CD8-positive, alpha-beta T cell (primary cell): ENCODE measurements at regions of chrX and their contacts with region 1.

Region 1: DNA sequence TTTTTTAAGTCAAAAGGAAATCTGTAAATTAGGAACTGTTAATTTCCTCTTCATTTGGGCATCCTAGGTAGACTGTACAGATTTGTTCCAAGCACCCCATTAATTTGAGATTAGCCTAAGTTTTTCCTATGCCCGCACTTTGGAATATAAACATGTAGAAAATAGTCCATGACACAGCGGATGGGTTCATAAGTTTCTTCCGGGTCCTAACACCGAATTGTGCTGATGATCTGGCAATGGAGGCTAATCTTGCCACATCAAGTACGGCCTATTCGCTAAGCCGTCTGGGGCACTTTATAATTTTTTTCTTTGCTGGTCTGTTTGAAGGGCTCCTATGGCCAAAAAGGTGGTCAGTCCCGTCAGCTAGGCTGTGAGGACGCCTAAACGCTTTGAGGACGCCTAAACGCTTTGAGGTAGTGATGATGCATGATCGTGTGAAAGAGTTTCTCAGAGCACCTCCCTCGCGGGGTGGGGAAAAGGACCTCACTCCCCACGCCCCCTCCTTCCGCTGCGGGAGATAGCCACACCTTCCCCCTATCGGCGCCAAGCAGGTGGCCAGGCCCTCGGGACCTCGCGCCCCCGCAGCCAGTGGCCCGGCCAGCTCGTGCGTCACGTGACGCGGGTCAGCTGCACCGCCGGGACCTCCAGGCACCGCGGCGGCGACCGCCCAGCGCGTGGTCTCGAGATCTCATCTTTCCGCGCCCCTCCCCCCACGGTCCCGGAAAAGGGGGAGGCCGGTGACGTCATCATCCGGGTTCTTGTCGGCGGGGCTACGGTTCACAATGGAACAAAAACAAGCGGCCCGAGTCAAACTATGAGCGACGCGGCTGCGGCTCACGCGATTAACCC is 977 bp upstream of the USP9X start:
- DNase-seq: peak; percentile 88 to 100 (median 96)
- ATAC-seq: peak; percentile 66
- H3K4me3 ChIP-seq: peak overlapping the region; percentile 68 to 95
- H3K4me3 Mint-ChIP-seq: peak overlapping the region; percentile 95
- H3K27ac ChIP-seq: peak overlapping the region; percentile 98 to 100
- H3K27ac Mint-ChIP-seq: peak overlapping the region; percentile 100
- H3K4me1 ChIP-seq: peaks cover 19% of the 10 kb centered on the region
- H3K4me1 Mint-ChIP-seq: peaks cover 24% of the 10 kb centered on the region
- H3K27me3 ChIP-seq: no peaks in the 10 kb centered on the region
- H3K27me3 Mint-ChIP-seq: no peaks in the 10 kb centered on the region
- CTCF ChIP-seq: no peak

Region 2: DNA sequence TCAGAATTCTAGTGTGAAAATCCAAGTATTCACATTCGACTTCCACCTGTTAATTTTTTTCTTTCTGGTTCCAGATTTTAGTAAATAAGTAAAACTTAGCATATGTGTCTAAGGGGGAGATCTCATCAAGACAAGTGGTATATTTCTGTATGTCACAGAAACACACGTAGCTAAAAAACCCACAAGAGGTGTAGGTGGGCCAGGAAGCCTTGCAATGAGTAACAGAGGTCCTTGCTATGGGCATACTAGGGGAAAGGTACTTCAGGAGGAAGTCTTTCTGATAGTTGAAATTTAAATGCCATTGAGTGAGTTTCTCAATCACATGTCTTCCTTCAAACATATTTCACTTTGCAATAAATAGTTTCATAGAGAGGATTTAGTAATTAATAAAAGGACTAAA is 1967.2 kb before region 1 on chrX:
- CTCF ChIA-PET with region 1: no interaction called
- POLR2A ChIA-PET with region 1: no interaction called
- intact Hi-C with region 1: no loop called
- DNase-seq: no peak
- ATAC-seq: no peak
- H3K4me3 ChIP-seq: no peak overlapping the region
- H3K4me3 Mint-ChIP-seq: no peak overlapping the region
- H3K27ac ChIP-seq: no peak overlapping the region
- H3K27ac Mint-ChIP-seq: no peak overlapping the region
- H3K4me1 ChIP-seq: no peaks in the 10 kb centered on the region
- H3K4me1 Mint-ChIP-seq: no peaks in the 10 kb centered on the region
- H3K27me3 ChIP-seq: no peaks in the 10 kb centered on the region
- H3K27me3 Mint-ChIP-seq: peaks cover 2% of the 10 kb centered on the region
- CTCF ChIP-seq: no peak

Region 3: GRCh38 chrX:40169193-40170101 is 914.8 kb before region 1 on chrX:
- CTCF ChIA-PET with region 1: no interaction called
- POLR2A ChIA-PET with region 1: no interaction called
- intact Hi-C with region 1: loop called in 1 of 2 experiments (anchors 10 kb)
- DNase-seq: peak; percentile 62 to 91 (median 81)
- ATAC-seq: peak; percentile 66
- H3K4me3 ChIP-seq: peak overlapping the region; percentile 42 to 61
- H3K4me3 Mint-ChIP-seq: peak overlapping the region; percentile 85
- H3K27ac ChIP-seq: peak overlapping the region; percentile 83 to 95
- H3K27ac Mint-ChIP-seq: peak overlapping the region; percentile 96
- H3K4me1 ChIP-seq: peaks cover 49% of the 10 kb centered on the region
- H3K4me1 Mint-ChIP-seq: peaks cover 48% of the 10 kb centered on the region
- H3K27me3 ChIP-seq: no peaks in the 10 kb centered on the region
- H3K27me3 Mint-ChIP-seq: no peaks in the 10 kb centered on the region
- CTCF ChIP-seq: peak; percentile 22

Region 4: DNA sequence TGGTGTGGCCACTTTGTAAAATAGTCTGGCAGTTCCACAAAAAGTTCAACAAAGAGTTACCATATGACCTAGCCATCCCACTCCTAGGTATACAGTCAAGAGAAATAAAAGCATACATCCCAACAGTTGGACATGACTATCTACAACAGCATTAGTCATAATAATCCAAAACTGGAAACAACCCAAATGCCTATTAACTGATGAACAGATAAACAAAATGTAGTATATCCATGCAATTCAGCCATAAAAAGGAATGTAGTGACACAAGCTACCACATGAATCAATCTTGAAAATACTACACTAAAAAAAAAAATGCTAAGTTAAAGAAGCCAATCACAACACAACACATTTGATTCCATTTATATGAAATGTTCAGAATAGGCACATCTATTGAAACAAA is 365.1 kb before region 1 on chrX:
- CTCF ChIA-PET with region 1: no interaction called
- POLR2A ChIA-PET with region 1: interaction called, 10 read pairs
- intact Hi-C with region 1: no loop called
- DNase-seq: no peak
- ATAC-seq: no peak
- H3K4me3 ChIP-seq: no peak overlapping the region
- H3K4me3 Mint-ChIP-seq: no peak overlapping the region
- H3K27ac ChIP-seq: no peak overlapping the region
- H3K27ac Mint-ChIP-seq: peak overlapping the region; percentile 71
- H3K4me1 ChIP-seq: peaks cover 9% of the 10 kb centered on the region
- H3K4me1 Mint-ChIP-seq: peaks cover 57% of the 10 kb centered on the region
- H3K27me3 ChIP-seq: no peaks in the 10 kb centered on the region
- H3K27me3 Mint-ChIP-seq: no peaks in the 10 kb centered on the region
- CTCF ChIP-seq: no peak

Region 5: DNA sequence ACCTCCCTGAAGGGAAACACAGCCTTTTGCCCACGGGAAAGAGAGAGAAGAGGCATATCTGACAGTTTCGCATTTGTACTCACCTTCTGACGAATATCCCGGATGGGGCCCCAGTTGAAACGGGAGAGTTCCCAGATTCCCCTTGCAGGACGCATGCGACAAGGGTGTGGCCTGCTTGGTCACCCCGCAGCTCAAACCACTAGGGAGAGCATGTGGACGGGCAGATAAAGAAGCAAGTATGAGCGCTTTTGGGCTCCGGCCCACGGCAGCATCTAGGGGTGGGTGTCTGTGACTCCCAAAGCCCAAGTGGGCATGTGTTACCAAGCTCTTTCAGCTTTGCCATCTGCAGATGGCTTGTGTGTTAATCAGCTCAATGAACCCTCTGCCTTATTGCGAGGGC is 278.9 kb before region 1 on chrX:
- CTCF ChIA-PET with region 1: no interaction called
- POLR2A ChIA-PET with region 1: no interaction called
- intact Hi-C with region 1: no loop called
- DNase-seq: no peak
- ATAC-seq: no peak
- H3K4me3 ChIP-seq: no peak overlapping the region
- H3K4me3 Mint-ChIP-seq: no peak overlapping the region
- H3K27ac ChIP-seq: no peak overlapping the region
- H3K27ac Mint-ChIP-seq: no peak overlapping the region
- H3K4me1 ChIP-seq: no peaks in the 10 kb centered on the region
- H3K4me1 Mint-ChIP-seq: no peaks in the 10 kb centered on the region
- H3K27me3 ChIP-seq: no peaks in the 10 kb centered on the region
- H3K27me3 Mint-ChIP-seq: no peaks in the 10 kb centered on the region
- CTCF ChIP-seq: no peak

Region 6: DNA sequence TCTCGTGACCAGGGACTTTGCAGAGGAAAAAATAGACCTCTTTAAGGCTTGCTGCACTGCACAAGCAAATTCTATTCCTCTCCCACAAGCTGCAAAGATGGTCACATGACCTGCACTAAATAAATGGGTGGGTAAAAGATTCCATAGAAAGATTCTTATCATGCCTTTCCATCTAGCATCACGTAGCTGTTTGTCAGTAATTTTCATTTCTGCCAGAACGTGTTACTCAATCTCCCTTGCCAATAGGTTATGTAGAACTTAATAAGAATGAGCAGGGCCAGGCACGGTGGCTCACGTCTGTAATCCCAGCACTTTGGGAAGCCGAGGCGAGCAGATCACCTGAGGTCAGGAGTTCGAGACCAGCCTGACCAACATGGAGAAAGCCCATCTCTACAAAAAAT is 56.8 kb before region 1 on chrX:
- CTCF ChIA-PET with region 1: no interaction called
- POLR2A ChIA-PET with region 1: no interaction called
- intact Hi-C with region 1: no loop called
- DNase-seq: no peak
- ATAC-seq: no peak
- H3K4me3 ChIP-seq: no peak overlapping the region
- H3K4me3 Mint-ChIP-seq: no peak overlapping the region
- H3K27ac ChIP-seq: no peak overlapping the region
- H3K27ac Mint-ChIP-seq: no peak overlapping the region
- H3K4me1 ChIP-seq: no peaks in the 10 kb centered on the region
- H3K4me1 Mint-ChIP-seq: no peaks in the 10 kb centered on the region
- H3K27me3 ChIP-seq: peaks cover 0 to 2% of the 10 kb centered on the region in 2 experiments
- H3K27me3 Mint-ChIP-seq: no peaks in the 10 kb centered on the region
- CTCF ChIP-seq: no peak

Region 7: GRCh38 chrX:41110801-41111625 is 26.7 kb after region 1 on chrX:
- CTCF ChIA-PET with region 1: interaction called, 3 read pairs
- POLR2A ChIA-PET with region 1: interaction called, 37 read pairs
- intact Hi-C with region 1: loop called (anchors 1 to 2 kb)
- DNase-seq: peak in 2 of 9 experiments; percentile 11 to 16
- ATAC-seq: no peak
- H3K4me3 ChIP-seq: no peak overlapping the region
- H3K4me3 Mint-ChIP-seq: peak overlapping the region; percentile 29
- H3K27ac ChIP-seq: no peak overlapping the region
- H3K27ac Mint-ChIP-seq: peak overlapping the region; percentile 67
- H3K4me1 ChIP-seq: peaks cover 38% of the 10 kb centered on the region
- H3K4me1 Mint-ChIP-seq: peaks cover 70% of the 10 kb centered on the region
- H3K27me3 ChIP-seq: no peaks in the 10 kb centered on the region
- H3K27me3 Mint-ChIP-seq: no peaks in the 10 kb centered on the region
- CTCF ChIP-seq: no peak

Region 8: DNA sequence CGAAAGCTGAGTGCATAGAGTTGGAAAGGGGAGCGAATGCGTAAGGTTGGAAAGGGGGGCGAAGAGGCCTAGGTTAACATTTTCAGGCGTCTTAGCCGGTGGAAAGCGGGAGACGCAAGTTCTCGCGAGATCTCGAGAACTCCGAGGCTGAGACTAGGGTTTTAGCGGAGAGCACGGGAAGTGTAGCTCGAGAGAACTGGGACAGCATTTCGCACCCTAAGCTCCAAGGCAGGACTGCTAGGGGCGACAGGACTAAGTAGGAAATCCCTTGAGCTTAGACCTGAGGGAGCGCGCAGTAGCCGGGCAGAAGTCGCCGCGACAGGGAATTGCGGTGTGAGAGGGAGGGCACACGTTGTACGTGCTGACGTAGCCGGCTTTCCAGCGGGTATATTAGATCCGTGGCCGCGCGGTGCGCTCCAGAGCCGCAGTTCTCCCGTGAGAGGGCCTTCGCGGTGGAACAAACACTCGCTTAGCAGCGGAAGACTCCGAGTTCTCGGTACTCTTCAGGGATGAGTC is 249.5 kb after region 1 on chrX and contains the start of gene DDX3X:
- CTCF ChIA-PET with region 1: no interaction called
- POLR2A ChIA-PET with region 1: interaction called, 4 read pairs
- intact Hi-C with region 1: loop called in 1 of 2 experiments (anchors 2 kb)
- DNase-seq: peak; percentile 58 to 95 (median 81)
- ATAC-seq: peak; percentile 55
- H3K4me3 ChIP-seq: peak within 1 kb of the TSS; percentile 93 to 100
- H3K4me3 Mint-ChIP-seq: peak within 1 kb of the TSS; percentile 95
- H3K27ac ChIP-seq: peak within 1 kb of the TSS; percentile 99
- H3K27ac Mint-ChIP-seq: peak within 1 kb of the TSS; percentile 99
- H3K4me1 ChIP-seq: peaks cover 14% of the 10 kb centered on the region
- H3K4me1 Mint-ChIP-seq: peaks cover 33% of the 10 kb centered on the region
- H3K27me3 ChIP-seq: no peaks in the 10 kb centered on the region
- H3K27me3 Mint-ChIP-seq: no peaks in the 10 kb centered on the region
- CTCF ChIP-seq: peak; percentile 23
- total RNA-seq, gene DDX3X: 643 to 648 TPM

Region 9: GRCh38 chrX:42505016-42505415 is 1420.7 kb after region 1 on chrX:
- CTCF ChIA-PET with region 1: no interaction called
- POLR2A ChIA-PET with region 1: no interaction called
- intact Hi-C with region 1: no loop called
- DNase-seq: no peak
- ATAC-seq: no peak
- H3K4me3 ChIP-seq: no peak overlapping the region
- H3K4me3 Mint-ChIP-seq: no peak overlapping the region
- H3K27ac ChIP-seq: no peak overlapping the region
- H3K27ac Mint-ChIP-seq: no peak overlapping the region
- H3K4me1 ChIP-seq: no peaks in the 10 kb centered on the region
- H3K4me1 Mint-ChIP-seq: peaks cover 2% of the 10 kb centered on the region
- H3K27me3 ChIP-seq: no peaks in the 10 kb centered on the region
- H3K27me3 Mint-ChIP-seq: no peaks in the 10 kb centered on the region
- CTCF ChIP-seq: no peak